ENCODE measurements at regions of chr13 and their contacts with region 1.

Region 1: GRCh38 chr13:62119739-62120700 is 704.4 kb upstream of the PCDH20 start:
- DNase-seq: no peak
- H3K4me3 ChIP-seq: no peak overlapping the region
- H3K27ac ChIP-seq: no peak overlapping the region
- H3K4me1 ChIP-seq: no peaks in the 10 kb centered on the region
- H3K27me3 ChIP-seq: no peaks in the 10 kb centered on the region
- CTCF ChIP-seq: peak; percentile 71

Region 2: GRCh38 chr13:62085337-62086229 is 34.4 kb before region 1 on chr13:
- CTCF ChIA-PET with region 1: no interaction called
- POLR2A ChIA-PET with region 1: interaction called, 10 read pairs
- intact Hi-C with region 1: no loop called
- DNase-seq: no peak
- H3K4me3 ChIP-seq: no peak overlapping the region
- H3K27ac ChIP-seq: no peak overlapping the region
- H3K4me1 ChIP-seq: no peaks in the 10 kb centered on the region
- H3K27me3 ChIP-seq: no peaks in the 10 kb centered on the region
- CTCF ChIP-seq: no peak

Region 3: GRCh38 chr13:62193919-62194318 is 73.9 kb after region 1 on chr13:
- CTCF ChIA-PET with region 1: no interaction called
- POLR2A ChIA-PET with region 1: no interaction called
- intact Hi-C with region 1: no loop called
- DNase-seq: no peak
- H3K4me3 ChIP-seq: no peak overlapping the region
- H3K27ac ChIP-seq: no peak overlapping the region
- H3K4me1 ChIP-seq: no peaks in the 10 kb centered on the region
- H3K27me3 ChIP-seq: no peaks in the 10 kb centered on the region
- CTCF ChIP-seq: no peak

Region 4: DNA sequence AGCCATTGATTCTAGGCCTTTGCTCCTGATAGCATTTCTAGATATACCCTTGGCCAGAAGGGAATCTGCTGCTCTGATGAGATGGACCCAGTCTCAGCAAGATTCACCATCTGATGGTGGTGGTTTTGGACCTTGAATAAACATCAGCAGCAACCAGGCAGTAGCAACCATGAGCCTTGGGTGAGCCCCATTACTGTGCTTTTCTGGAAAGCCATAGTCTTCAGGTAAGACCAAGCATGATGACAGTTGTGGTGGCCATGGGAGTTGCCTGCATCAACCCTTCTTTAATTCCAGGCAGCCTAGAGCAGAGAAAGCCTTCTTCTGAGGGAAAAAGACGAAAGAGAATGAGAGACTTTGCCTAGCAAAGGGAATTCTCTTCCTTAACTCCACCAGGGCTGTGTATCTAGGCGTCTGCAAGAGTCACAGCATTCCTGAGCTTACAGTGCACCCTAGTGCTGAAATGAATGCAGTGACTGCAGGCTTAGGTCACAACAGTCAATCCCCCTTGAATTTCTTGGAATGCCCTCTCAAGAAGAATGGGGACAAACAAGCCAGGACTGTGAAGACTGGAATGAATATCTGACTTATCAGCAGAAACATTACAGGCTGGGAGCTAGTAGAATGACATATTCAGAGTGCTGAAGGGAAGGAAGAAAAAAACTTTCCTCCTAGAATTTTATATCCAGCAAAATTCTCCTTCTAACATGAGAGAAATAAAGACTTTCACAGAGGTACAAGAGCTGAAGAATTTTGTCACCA is 238.0 kb after region 1 on chr13:
- CTCF ChIA-PET with region 1: no interaction called
- POLR2A ChIA-PET with region 1: no interaction called
- intact Hi-C with region 1: loop called (anchors 1 kb)
- DNase-seq: peak in 1 of 2 experiments; percentile 33
- H3K4me3 ChIP-seq: no peak overlapping the region
- H3K27ac ChIP-seq: no peak overlapping the region
- H3K4me1 ChIP-seq: no peaks in the 10 kb centered on the region
- H3K27me3 ChIP-seq: no peaks in the 10 kb centered on the region
- CTCF ChIP-seq: peak; percentile 65